ENCODE measurements at regions of chr22 and their contacts with region 1.

Region 1: GRCh38 chr22:23539135-23539838 is 40.8 kb downstream of the IGLL1 start:
- DNase-seq: peak; percentile 80 to 87 (median 82)
- H3K4me3 ChIP-seq: no peak overlapping the region
- H3K27ac ChIP-seq: peak overlapping the region in 1 of 2 donors; percentile 88
- H3K4me1 ChIP-seq: peaks cover 28% of the 10 kb centered on the region
- H3K27me3 ChIP-seq: no peaks in the 10 kb centered on the region
- CTCF ChIP-seq: peak; percentile 82 to 97 (median 97)
- EP300 ChIP-seq: no peak
- POLR2A ChIP-seq: peak; percentile 25

Region 2: DNA sequence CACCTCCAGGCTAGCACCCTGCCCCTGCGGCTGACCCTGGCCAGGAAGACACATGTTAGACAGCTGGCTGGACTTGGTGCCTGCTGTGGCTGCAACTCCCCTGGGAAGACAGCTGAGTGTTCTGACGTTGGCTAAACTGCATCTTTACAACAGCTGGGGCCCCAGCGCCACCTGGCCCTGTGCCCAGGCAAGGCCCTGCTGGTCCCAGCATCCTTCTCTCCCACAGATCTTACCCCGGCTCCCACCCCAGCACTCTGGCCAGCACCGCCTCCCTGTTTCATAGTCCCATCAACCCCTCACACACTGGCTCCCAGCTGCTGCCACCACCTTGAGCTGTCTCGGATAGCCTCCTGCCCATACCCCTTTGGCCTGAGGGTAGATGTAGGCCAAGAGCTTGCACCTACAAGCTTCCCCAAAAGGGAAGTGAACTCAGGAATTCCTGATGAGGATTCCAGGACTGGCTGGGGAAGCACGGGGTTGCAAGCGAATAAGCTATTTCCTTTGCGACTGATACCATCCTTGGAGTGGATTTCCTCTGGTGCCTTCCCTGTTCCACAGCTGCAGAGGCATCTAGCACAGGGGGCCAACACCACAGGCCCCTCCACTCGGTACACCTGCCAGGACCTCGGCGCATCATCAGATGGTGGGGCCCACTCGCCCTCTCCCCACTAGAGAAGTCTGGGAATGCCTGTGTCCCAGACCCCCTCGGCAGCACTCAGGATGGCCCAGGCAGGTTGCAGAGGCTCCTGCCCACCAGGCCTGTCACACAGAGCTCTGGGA is 426.0 kb before region 1 on chr22:
- intact Hi-C with region 1: no loop called
- DNase-seq: peak; percentile 47 to 88 (median 77)
- H3K4me3 ChIP-seq: no peak overlapping the region
- H3K27ac ChIP-seq: peak overlapping the region; percentile 30 to 57
- H3K4me1 ChIP-seq: peaks cover 11% of the 10 kb centered on the region
- H3K27me3 ChIP-seq: no peaks in the 10 kb centered on the region
- CTCF ChIP-seq: no peak
- EP300 ChIP-seq: no peak
- POLR2A ChIP-seq: no peak

Region 3: DNA sequence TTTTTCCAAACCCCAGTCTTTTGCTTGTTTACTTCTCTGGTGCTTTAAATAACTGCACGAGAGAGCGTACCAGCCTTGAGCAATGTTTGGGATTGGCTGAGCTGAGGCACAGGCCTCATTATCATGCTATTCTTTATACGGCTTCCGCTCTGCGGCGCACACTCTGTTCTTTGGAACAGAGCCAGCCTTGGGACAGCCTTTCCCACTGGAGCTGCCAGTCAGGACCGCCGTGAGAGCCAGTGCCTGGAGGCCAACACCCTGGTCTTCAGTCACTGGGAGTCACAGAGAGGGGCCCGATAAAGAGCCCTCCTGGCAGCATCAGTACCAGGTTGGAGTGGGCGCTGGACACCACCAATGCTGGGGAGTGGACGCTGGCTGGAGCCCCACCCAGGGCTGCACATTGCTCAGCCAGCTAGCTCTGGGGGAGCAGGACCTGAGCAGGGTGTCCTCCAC is 233.3 kb before region 1 on chr22:
- intact Hi-C with region 1: loop called in 1 of 4 experiments (anchors 10 kb)
- DNase-seq: peak; percentile 78 to 90 (median 89)
- H3K4me3 ChIP-seq: no peak overlapping the region
- H3K27ac ChIP-seq: peak overlapping the region; percentile 52 to 82
- H3K4me1 ChIP-seq: peaks cover 18% of the 10 kb centered on the region
- H3K27me3 ChIP-seq: no peaks in the 10 kb centered on the region
- CTCF ChIP-seq: no peak
- EP300 ChIP-seq: peak; percentile 30
- POLR2A ChIP-seq: no peak

Region 4: GRCh38 chr22:23322547-23322946 is 216.7 kb before region 1 on chr22:
- intact Hi-C with region 1: loop called in 1 of 4 experiments (anchors 5 kb)
- DNase-seq: no peak
- H3K4me3 ChIP-seq: no peak overlapping the region
- H3K27ac ChIP-seq: no peak overlapping the region
- H3K4me1 ChIP-seq: no peaks in the 10 kb centered on the region
- H3K27me3 ChIP-seq: no peaks in the 10 kb centered on the region
- CTCF ChIP-seq: no peak
- EP300 ChIP-seq: no peak
- POLR2A ChIP-seq: no peak

Region 5: DNA sequence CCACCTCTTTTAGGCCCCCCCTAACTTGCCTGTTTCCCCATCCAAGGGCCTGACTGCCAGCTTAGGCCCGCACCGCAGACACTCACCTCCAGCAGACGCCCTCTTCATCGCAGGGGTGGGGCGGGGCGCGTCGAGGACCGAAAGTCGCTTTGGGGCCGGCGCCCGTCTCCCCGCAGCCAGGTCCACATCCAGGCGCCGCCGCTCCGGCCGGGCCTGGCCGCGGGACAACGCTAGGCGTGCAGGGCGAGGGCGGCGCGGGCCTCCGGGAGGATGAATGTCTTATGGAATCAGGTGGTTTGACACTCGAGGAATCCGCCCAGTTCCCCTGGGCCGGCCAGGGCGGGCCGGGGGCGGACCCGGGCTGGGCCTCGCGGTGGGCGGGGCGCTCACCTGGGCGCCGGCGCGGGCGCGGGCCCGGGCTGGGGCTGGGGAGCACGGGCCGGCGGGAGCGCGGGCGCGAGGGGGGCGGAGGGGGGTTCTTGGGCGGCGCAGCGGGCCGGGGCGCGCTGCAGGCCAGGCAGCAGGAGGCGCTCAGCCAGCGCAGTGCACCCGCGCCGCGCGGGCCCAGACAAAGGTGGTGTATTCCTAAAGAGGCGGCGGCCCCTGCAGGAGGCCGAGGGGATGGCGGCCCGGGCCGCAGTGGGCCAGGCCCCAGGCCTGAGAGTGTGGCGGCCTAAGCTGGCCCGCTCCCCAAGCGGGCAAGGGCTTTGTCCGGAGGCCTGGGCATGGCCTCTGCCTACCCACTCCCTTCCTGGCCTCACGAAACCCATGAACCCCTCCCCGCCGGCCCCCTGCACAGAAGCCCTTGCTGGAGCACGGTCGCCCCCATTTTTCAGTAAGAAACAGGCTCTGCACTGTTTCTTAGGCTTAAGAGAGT is 136.8 kb before region 1 on chr22:
- intact Hi-C with region 1: loop called in 3 of 4 experiments (anchors 5 to 10 kb)
- DNase-seq: peak; percentile 79 to 93 (median 87)
- H3K4me3 ChIP-seq: peak overlapping the region; percentile 26
- H3K27ac ChIP-seq: peak overlapping the region; percentile 48 to 83
- H3K4me1 ChIP-seq: peaks cover 8% of the 10 kb centered on the region
- H3K27me3 ChIP-seq: no peaks in the 10 kb centered on the region
- CTCF ChIP-seq: peak; percentile 36 to 83 (median 70)
- EP300 ChIP-seq: no peak
- POLR2A ChIP-seq: no peak

Region 6: GRCh38 chr22:23431337-23432072 is 107.8 kb before region 1 on chr22:
- intact Hi-C with region 1: loop called in 1 of 4 experiments (anchors 10 kb)
- DNase-seq: peak in 3 of 5 donors; percentile 35 to 60 (median 42)
- H3K4me3 ChIP-seq: no peak overlapping the region
- H3K27ac ChIP-seq: no peak overlapping the region
- H3K4me1 ChIP-seq: peaks cover 4% of the 10 kb centered on the region
- H3K27me3 ChIP-seq: no peaks in the 10 kb centered on the region
- CTCF ChIP-seq: no peak
- EP300 ChIP-seq: no peak
- POLR2A ChIP-seq: no peak

Region 7: GRCh38 chr22:23591201-23591791 is 52.0 kb after region 1 on chr22:
- intact Hi-C with region 1: loop called in 2 of 4 experiments (anchors 2 to 10 kb)
- DNase-seq: peak; percentile 90 to 95 (median 92)
- H3K4me3 ChIP-seq: no peak overlapping the region
- H3K27ac ChIP-seq: peak overlapping the region in 1 of 2 donors; percentile 90
- H3K4me1 ChIP-seq: peaks cover 7% of the 10 kb centered on the region
- H3K27me3 ChIP-seq: no peaks in the 10 kb centered on the region
- CTCF ChIP-seq: peak; percentile 87 to 93 (median 91)
- EP300 ChIP-seq: no peak
- POLR2A ChIP-seq: no peak

Region 8: GRCh38 chr22:23849009-23850006 is 310.0 kb after region 1 on chr22:
- intact Hi-C with region 1: loop called in 2 of 4 experiments (anchors 5 to 10 kb)
- DNase-seq: peak; percentile 74 to 92 (median 85)
- H3K4me3 ChIP-seq: no peak overlapping the region
- H3K27ac ChIP-seq: no peak overlapping the region
- H3K4me1 ChIP-seq: peaks cover 5% of the 10 kb centered on the region
- H3K27me3 ChIP-seq: no peaks in the 10 kb centered on the region
- CTCF ChIP-seq: peak; percentile 90 to 99 (median 97)
- EP300 ChIP-seq: no peak
- POLR2A ChIP-seq: no peak